ENCODE measurements at regions of chr12 and their contacts with region 1.

Region 1: DNA sequence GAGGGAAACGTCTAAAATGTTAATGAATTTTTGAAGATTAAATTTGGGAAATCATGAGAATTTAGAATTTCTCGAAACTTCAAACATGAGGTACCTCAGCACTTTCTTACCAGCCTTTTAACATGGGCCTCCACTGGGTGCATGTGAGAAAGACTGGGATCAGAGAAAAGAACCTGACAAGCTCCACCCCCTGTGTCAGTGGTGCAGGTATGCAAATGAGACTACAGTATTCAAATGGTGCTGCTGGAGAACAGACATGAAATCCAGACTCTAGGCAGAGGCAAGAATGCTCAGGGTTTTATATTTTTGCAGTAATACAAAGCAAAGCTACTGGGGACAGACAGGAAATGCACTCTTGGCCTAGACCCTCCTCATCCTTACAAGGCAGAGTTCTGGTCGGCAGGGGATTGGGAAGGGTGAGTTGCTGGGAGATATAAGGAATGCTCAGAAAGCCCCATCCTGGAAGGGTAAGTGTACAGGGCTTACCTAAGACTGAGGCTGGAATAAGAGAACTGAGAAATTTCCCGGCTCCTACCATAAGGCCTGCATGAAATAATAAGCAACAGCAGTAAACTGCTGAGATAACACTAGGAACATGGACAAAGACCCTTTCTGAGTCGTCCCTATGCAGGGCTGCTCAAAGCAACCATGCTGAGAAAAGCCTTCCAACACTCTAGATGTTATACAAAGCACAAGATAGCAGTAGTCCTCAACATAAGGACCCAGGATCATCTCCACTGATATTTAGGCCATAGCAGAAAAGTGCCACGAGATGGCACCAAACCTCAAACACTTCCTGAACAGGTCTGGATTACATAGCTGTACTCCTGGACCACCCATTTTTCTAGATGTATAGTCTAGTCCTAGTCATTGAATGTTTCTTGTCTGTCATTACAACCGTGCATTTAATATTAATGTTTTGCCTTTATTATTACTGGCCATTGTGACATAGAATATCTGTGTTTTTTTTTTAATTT is 260.8 kb downstream of the RASSF9 start:
- DNase-seq: peak; percentile 64
- ATAC-seq: peak; percentile 97
- H3K4me3 ChIP-seq: no peak overlapping the region
- H3K27ac ChIP-seq: no peak overlapping the region
- H3K4me1 ChIP-seq: no peaks in the 10 kb centered on the region
- H3K27me3 ChIP-seq: no peaks in the 10 kb centered on the region
- CTCF ChIP-seq: peak; percentile 77
- POLR2A ChIP-seq: no peak
- RAD21 ChIP-seq: peak; percentile 76

Region 2: DNA sequence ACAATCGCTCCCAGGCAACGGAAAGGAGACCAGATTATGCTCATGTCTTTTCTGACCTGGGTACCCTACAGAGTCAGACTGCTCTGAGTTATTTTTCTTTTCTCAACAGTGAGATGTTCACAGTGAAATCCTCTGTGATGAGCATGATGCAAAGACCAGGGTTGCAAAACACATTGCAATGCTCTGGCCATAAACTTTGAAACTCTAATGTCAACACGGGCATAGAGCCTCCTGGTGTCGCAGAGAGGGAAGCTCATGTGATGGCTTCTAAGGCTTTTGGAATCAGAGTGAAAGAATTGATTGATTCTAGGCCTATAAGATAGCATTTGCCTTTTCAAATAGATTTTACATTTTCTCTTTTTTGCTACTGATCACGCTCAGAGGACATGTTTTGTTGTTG is 67.4 kb after region 1 on chr12:
- CTCF ChIA-PET with region 1: interaction called, 3 read pairs
- POLR2A ChIA-PET with region 1: no interaction called
- dilution Hi-C with region 1: no loop called
- in situ Hi-C with region 1: no loop called
- intact Hi-C with region 1: loop called (anchors 1 kb)
- DNase-seq: peak; percentile 78
- ATAC-seq: peak; percentile 98
- H3K4me3 ChIP-seq: no peak overlapping the region
- H3K27ac ChIP-seq: no peak overlapping the region
- H3K4me1 ChIP-seq: no peaks in the 10 kb centered on the region
- H3K27me3 ChIP-seq: no peaks in the 10 kb centered on the region
- CTCF ChIP-seq: peak; percentile 61
- POLR2A ChIP-seq: no peak
- RAD21 ChIP-seq: peak; percentile 51

Region 3: DNA sequence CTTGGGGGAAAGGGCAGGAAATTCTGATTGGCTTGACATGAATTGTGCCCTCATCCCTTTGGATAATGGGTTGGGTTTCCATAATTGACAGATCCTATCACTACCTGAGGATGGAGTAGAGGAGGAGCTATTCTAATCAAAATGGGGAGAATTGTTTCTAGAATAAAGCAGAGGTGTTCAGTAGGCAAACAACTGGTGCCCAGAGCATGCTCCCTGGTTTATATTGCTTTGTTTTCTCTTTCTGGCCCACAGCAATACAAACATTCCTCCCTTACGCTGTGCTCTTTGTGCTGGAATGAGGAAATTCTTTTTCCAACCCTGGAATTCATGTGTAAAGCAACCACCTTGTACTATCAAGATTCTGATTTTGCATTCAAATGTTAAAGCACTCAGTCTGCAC is 113.4 kb after region 1 on chr12:
- CTCF ChIA-PET with region 1: no interaction called
- POLR2A ChIA-PET with region 1: no interaction called
- dilution Hi-C with region 1: no loop called
- in situ Hi-C with region 1: no loop called
- intact Hi-C with region 1: no loop called
- DNase-seq: no peak
- ATAC-seq: no peak
- H3K4me3 ChIP-seq: no peak overlapping the region
- H3K27ac ChIP-seq: no peak overlapping the region
- H3K4me1 ChIP-seq: no peaks in the 10 kb centered on the region
- H3K27me3 ChIP-seq: no peaks in the 10 kb centered on the region
- CTCF ChIP-seq: no peak
- POLR2A ChIP-seq: no peak
- RAD21 ChIP-seq: no peak

Region 4: DNA sequence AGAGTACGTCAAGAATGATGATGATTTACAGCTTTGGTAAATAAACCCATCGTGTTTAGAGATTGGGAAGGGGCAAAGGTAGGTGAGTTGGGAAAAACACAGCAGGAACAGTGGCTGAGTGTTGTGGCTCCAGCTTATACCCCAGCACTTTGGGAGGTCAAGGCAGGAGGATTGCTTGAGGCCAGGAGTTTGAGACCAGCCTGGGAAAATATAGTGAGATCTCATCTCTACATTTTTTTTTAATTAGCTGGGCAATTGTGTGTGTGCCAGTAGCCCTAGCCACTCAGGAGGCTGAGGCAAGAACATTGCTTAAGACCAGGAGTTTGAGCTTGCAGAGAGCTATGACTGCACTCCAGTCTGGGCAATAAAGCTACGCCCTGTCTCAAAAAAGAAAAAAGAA is 183.7 kb after region 1 on chr12:
- CTCF ChIA-PET with region 1: interaction called, 10 read pairs
- POLR2A ChIA-PET with region 1: no interaction called
- dilution Hi-C with region 1: no loop called
- in situ Hi-C with region 1: no loop called
- intact Hi-C with region 1: no loop called
- DNase-seq: no peak
- ATAC-seq: no peak
- H3K4me3 ChIP-seq: no peak overlapping the region
- H3K27ac ChIP-seq: no peak overlapping the region
- H3K4me1 ChIP-seq: no peaks in the 10 kb centered on the region
- H3K27me3 ChIP-seq: no peaks in the 10 kb centered on the region
- CTCF ChIP-seq: no peak
- POLR2A ChIP-seq: no peak
- RAD21 ChIP-seq: no peak

Region 5: DNA sequence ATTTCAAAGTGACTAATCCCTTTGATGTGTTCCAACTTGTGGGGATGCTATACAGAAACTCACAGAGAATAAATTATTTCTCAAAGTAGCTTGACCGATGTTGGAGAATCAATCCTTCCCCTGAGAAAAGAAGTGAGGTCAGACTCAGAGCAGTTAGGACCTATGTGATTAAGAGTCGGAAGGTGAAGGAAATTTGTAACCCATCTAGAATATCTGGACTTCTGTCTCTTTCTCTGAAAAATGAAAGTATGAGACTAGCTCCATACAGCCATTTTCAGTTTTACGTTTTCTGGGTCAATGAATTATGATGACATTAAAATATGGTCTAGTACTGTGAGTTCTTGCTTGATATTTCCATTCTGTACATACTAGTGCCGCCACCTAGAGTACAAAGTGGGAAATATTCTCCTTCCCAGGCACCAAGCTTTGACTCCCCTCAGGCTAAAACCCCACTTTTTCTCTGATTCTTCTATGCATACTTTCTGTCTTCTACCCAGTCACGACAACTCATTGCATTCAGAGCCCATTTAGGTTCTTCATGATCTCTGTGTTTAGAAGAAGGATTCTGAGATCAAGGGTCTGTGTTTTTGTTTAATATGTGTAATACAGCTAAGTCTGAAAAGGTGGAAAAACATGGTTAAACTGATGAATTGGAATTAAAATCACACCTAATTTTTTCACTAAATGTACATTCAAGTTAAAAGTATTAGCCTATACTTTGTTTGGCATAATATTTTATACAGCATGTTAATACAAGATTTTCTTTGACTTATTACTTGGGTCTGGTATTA is 291.8 kb after region 1 on chr12:
- CTCF ChIA-PET with region 1: interaction called, 15 read pairs
- POLR2A ChIA-PET with region 1: no interaction called
- dilution Hi-C with region 1: no loop called
- in situ Hi-C with region 1: loop called (anchors 5 kb)
- intact Hi-C with region 1: loop called (anchors 1 kb)
- DNase-seq: peak; percentile 61
- ATAC-seq: peak; percentile 92
- H3K4me3 ChIP-seq: no peak overlapping the region
- H3K27ac ChIP-seq: no peak overlapping the region
- H3K4me1 ChIP-seq: no peaks in the 10 kb centered on the region
- H3K27me3 ChIP-seq: no peaks in the 10 kb centered on the region
- CTCF ChIP-seq: peak; percentile 79
- POLR2A ChIP-seq: no peak
- RAD21 ChIP-seq: peak; percentile 79